ENCODE measurements at regions of chr11 and their contacts with region 1.

Region 1: DNA sequence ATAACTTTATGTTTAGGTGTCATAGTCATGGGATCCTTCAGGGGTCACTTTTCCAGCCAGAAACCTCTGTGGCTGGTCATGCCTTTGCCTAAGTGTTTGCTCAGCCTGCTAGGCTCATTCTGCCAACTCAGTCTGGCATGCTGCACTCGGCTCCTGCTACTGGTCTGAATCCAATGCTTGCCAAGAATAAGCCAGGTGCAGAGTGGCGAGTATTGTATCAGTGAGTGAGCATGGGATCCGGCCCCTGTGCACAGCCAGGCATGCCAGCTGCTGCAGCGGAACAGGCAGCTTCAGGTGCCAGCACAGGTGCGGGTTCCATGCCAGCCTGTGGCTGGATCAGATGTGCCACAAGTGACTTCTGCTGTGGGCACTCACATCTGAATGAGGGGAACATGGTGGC is 1269.3 kb upstream of the CNTN5 start:
- DNase-seq: no peak
- H3K4me3 ChIP-seq: no peak overlapping the region
- H3K27ac ChIP-seq: no peak overlapping the region
- H3K4me1 ChIP-seq: no peaks in the 10 kb centered on the region
- H3K27me3 ChIP-seq: no peaks in the 10 kb centered on the region
- CTCF ChIP-seq: no peak
- POLR2A ChIP-seq: no peak

Region 2: DNA sequence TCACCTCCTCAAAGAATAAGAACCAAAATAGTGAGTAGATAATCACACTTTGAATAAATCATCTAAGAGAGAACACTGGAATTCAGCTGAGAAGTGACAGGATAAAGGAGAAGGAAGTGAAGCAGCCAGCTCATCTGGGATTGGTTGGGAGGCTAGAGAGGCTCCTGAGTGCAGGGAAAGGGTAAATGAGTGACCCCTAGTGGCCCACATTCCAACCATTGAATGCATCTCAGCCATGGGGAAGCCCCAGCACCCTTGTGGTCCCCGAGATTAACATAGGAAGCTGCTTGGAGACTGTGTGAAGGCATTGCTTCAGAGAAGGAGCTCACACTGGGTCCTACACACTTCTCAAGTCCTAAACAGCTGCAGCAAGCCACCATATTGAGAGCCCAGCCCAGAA is 1279.3 kb before region 1 on chr11:
- intact Hi-C with region 1: loop called (anchors 5 kb)
- DNase-seq: no peak
- H3K4me3 ChIP-seq: no peak overlapping the region
- H3K27ac ChIP-seq: no peak overlapping the region
- H3K4me1 ChIP-seq: no peaks in the 10 kb centered on the region
- H3K27me3 ChIP-seq: no peaks in the 10 kb centered on the region
- CTCF ChIP-seq: no peak
- POLR2A ChIP-seq: no peak

Region 3: GRCh38 chr11:97361812-97362378 is 389.5 kb before region 1 on chr11:
- intact Hi-C with region 1: no loop called
- DNase-seq: no peak
- H3K4me3 ChIP-seq: no peak overlapping the region
- H3K27ac ChIP-seq: no peak overlapping the region
- H3K4me1 ChIP-seq: no peaks in the 10 kb centered on the region
- H3K27me3 ChIP-seq: no peaks in the 10 kb centered on the region
- CTCF ChIP-seq: no peak
- POLR2A ChIP-seq: no peak

Region 4: DNA sequence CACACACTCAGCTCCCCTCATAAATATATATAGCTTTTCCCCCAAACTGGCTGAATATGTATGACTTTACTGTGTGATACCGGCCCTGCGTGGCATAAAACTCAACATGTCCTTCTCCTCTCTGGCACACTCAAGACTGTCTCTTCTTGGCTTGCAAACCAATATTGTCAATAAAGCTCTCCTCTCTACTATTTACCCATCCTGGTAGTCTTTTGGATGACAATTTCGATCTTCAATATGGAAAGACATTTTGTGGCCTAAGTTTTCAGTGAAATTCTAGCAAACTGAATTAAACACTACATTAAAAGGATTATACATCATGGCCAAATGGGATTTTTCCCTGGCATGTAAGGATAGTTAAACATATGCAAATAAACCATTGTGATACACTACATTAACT is 105.7 kb before region 1 on chr11:
- intact Hi-C with region 1: loop called (anchors 5 kb)
- DNase-seq: no peak
- H3K4me3 ChIP-seq: no peak overlapping the region
- H3K27ac ChIP-seq: no peak overlapping the region
- H3K4me1 ChIP-seq: no peaks in the 10 kb centered on the region
- H3K27me3 ChIP-seq: no peaks in the 10 kb centered on the region
- CTCF ChIP-seq: no peak
- POLR2A ChIP-seq: no peak

Region 5: DNA sequence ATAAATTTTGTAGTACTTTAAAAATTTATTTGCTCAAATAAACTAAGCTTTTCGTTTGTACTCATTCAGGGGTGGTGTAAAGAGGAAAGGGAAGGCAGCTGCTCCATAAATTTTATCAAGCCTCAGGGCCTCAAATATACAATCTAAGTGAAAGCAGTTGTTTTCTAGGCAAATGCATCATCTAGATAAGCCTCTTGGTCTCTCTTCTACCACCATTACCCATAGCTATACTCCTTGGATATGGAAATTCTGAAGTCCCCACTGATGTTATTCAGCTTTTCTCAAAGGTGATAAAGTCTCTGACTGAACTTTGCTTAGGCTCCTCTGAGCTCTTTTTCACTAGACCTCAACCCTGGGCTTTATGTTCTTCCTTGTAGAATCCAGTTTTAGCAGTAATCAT is 48.5 kb before region 1 on chr11:
- intact Hi-C with region 1: no loop called
- DNase-seq: no peak
- H3K4me3 ChIP-seq: no peak overlapping the region
- H3K27ac ChIP-seq: no peak overlapping the region
- H3K4me1 ChIP-seq: no peaks in the 10 kb centered on the region
- H3K27me3 ChIP-seq: no peaks in the 10 kb centered on the region
- CTCF ChIP-seq: no peak
- POLR2A ChIP-seq: no peak

Region 6: GRCh38 chr11:98365941-98366340 is 614.5 kb after region 1 on chr11:
- intact Hi-C with region 1: no loop called
- DNase-seq: no peak
- H3K4me3 ChIP-seq: no peak overlapping the region
- H3K27ac ChIP-seq: no peak overlapping the region
- H3K4me1 ChIP-seq: no peaks in the 10 kb centered on the region
- H3K27me3 ChIP-seq: no peaks in the 10 kb centered on the region
- CTCF ChIP-seq: no peak
- POLR2A ChIP-seq: no peak